ENCODE measurements at regions of chr1 and their contacts with region 1.

Region 1: DNA sequence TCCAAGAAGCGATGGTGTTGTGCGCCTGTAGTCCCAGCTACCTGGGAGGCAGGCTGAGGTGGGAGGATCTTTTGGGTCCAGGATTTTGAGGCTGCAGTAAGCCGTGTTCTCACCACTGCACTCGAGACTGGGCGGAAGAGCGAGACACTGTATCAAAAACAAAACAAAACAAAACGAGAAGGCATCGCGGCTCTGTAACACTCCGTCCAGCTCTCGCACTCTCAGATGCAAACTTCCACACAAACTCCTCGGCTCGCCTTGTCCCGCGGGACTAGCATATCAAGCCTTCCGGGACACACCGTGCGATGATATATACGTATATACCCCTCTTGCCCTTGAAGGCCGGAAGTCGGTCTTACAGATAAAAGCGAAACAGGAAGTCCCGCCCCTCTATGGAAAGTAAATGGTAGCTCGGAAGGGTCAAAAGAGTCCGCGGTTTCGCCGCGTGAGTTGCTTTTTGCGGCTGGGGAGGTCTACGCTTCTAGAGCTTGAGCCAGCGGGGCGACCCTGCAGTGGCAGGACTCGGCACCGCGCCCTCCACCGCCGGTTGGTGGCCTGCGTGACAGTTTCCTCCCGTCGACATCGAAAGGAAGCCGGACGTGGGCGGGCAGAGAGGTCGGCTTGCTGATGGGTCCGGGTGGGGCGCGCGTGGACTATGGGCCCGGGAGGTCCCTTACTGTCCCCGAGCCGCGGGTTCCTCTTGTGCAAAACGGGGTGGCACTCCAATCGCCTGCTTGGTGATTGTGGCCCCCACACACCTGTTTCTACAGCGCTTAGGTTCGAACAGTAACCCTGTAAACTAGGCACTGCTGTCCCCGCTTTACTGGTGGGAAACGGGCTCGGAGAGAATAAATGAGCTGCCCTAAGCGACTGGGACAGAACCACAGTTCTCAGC is at the start of gene COA6:
- DNase-seq: peak; percentile 87
- H3K4me3 ChIP-seq: peak within 1 kb of the TSS; percentile 86 to 96
- H3K27ac ChIP-seq: peak within 1 kb of the TSS; percentile 92 to 99
- H3K4me1 ChIP-seq: peaks cover 3 to 13% of the 10 kb centered on the region in 2 experiments; a peak in 3 of 4 replicates
- H3K27me3 ChIP-seq: no peaks in the 10 kb centered on the region
- CTCF ChIP-seq: no peak
- EP300 ChIP-seq: peak in 1 of 2 experiments; percentile 37; a peak in 1 of 4 replicates
- RAD21 ChIP-seq: no peak
- polyA plus RNA-seq, gene COA6: 34.2 and 42.2 TPM in 2 replicates

Region 2: GRCh38 chr1:234246638-234247116 is 126.6 kb before region 1 on chr1:
- CTCF ChIA-PET with region 1: no interaction called
- POLR2A ChIA-PET with region 1: no interaction called
- DNase-seq: no peak
- H3K4me3 ChIP-seq: no peak overlapping the region
- H3K27ac ChIP-seq: no peak overlapping the region
- H3K4me1 ChIP-seq: peaks cover 0 to 5% of the 10 kb centered on the region in 2 experiments; a peak in 1 of 4 replicates
- H3K27me3 ChIP-seq: no peaks in the 10 kb centered on the region
- CTCF ChIP-seq: no peak
- EP300 ChIP-seq: no peak
- RAD21 ChIP-seq: no peak

Region 3: GRCh38 chr1:234281826-234282489 is 91.4 kb before region 1 on chr1:
- CTCF ChIA-PET with region 1: no interaction called
- POLR2A ChIA-PET with region 1: no interaction called
- DNase-seq: peak; percentile 74
- H3K4me3 ChIP-seq: no peak overlapping the region
- H3K27ac ChIP-seq: peak overlapping the region in 1 of 2 experiments; percentile 86; a peak in 2 of 4 replicates
- H3K4me1 ChIP-seq: peaks cover 0 to 20% of the 10 kb centered on the region in 2 experiments; a peak in 2 of 4 replicates
- H3K27me3 ChIP-seq: no peaks in the 10 kb centered on the region
- CTCF ChIP-seq: no peak
- EP300 ChIP-seq: peak in 1 of 2 experiments; percentile 49; a peak in 1 of 4 replicates
- RAD21 ChIP-seq: peak; percentile 33

Region 4: GRCh38 chr1:234355782-234356510 is 17.4 kb before region 1 on chr1:
- CTCF ChIA-PET with region 1: no interaction called
- POLR2A ChIA-PET with region 1: interaction called, 11 read pairs
- DNase-seq: peak; percentile 21
- H3K4me3 ChIP-seq: peak overlapping the region in 1 of 2 experiments; percentile 51; a peak in 1 of 4 replicates
- H3K27ac ChIP-seq: no peak overlapping the region
- H3K4me1 ChIP-seq: no peaks in the 10 kb centered on the region; a peak in 1 of 4 replicates
- H3K27me3 ChIP-seq: no peaks in the 10 kb centered on the region
- CTCF ChIP-seq: no peak
- EP300 ChIP-seq: no peak
- RAD21 ChIP-seq: no peak

Measured in SK-N-SH (cell line).